Esophagus muscularis mucosa (tissue), 4 donors: ENCODE measurements at regions of chr17 and their contacts with region 1.

Region 1: GRCh38 chr17:81394921-81395599 is at the start of gene BAHCC1:
- DNase-seq: peak; percentile 100
- H3K4me3 ChIP-seq: peak within 1 kb of the TSS; percentile 79 to 95 (median 90)
- H3K27ac ChIP-seq: peak within 1 kb of the TSS; percentile 96 to 100 (median 99)
- H3K4me1 ChIP-seq: peaks cover 34 to 60% (median 58%) of the 10 kb centered on the region in 4 donors
- H3K27me3 ChIP-seq: no peaks in the 10 kb centered on the region
- CTCF ChIP-seq: peak in 1 of 3 experiments; percentile 11
- EP300 ChIP-seq: no peak
- POLR2A ChIP-seq: peak; percentile 85
- total RNA-seq, gene BAHCC1: 15.9 to 38.1 (median 21.1) TPM

Region 2: GRCh38 chr17:81346090-81346907 is 48.8 kb before region 1 on chr17:
- intact Hi-C with region 1: loop called (anchors 1 kb)
- DNase-seq: peak; percentile 100
- H3K4me3 ChIP-seq: peak overlapping the region; percentile 70 to 96 (median 80)
- H3K27ac ChIP-seq: peak overlapping the region; percentile 81 to 98 (median 92)
- H3K4me1 ChIP-seq: peaks cover 10 to 36% (median 31%) of the 10 kb centered on the region in 4 donors
- H3K27me3 ChIP-seq: peaks cover 0 to 6% (median 0%) of the 10 kb centered on the region in 4 donors
- CTCF ChIP-seq: no peak
- EP300 ChIP-seq: no peak
- POLR2A ChIP-seq: peak; percentile 78